Gastrocnemius medialis (tissue), 4 donors: ENCODE measurements at regions of chr4 and their contacts with region 1.

Region 1: DNA sequence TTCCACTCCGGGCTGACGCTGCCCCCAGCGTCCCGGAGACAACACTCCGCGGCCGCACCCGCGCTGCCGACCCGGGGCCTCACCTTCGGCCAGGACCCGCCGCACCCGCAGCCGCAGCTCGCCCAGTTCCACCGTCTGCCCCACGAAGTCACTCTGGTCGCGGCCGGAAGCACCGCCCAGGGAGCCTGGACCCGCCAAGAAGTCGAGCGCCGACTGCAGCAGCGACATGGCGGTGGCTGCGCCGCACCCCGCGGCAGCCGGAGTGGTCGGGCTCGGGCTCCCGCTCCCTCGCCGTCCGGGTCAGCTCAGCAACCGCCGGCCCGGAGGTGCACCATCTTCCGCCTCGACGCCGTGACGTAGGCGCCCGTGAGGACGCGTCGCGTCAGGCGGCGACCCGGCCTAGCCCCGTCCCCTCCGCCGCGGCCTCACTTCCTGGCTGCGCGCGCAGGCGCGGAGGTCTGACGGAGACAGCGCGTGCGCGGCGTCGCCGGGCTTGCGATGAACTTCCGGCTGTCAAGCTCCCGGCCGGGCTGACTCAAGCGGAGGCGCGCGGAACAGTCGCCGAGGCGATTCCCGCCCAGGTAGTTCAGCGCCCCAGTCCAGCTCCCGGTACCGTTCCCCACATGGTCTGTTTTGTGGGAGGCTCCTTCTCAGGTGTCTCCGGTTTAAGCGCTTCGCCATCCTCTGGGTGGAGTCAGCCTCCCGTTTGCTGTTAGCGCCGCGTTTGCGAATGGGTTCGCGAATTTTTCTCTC is at the starts of genes GAK and TMEM175:
- DNase-seq: peak; percentile 87 to 95
- ATAC-seq: peak; percentile 81 to 88
- H3K4me3 ChIP-seq: peak within 1 kb of the TSS; percentile 85 to 97 (median 96)
- H3K27ac ChIP-seq: peak within 1 kb of the TSS; percentile 90 to 97 (median 94)
- H3K4me1 ChIP-seq: peaks cover 29 to 39% of the 10 kb centered on the region in 2 donors
- H3K27me3 ChIP-seq: no peaks in the 10 kb centered on the region
- CTCF ChIP-seq: no peak
- POLR2A ChIP-seq: peak; percentile 91 to 96
- total RNA-seq, gene GAK: 34.9 to 48.3 (median 44.5) TPM
- total RNA-seq, gene TMEM175: 15.3 to 29.6 (median 20.8) TPM

Region 2: DNA sequence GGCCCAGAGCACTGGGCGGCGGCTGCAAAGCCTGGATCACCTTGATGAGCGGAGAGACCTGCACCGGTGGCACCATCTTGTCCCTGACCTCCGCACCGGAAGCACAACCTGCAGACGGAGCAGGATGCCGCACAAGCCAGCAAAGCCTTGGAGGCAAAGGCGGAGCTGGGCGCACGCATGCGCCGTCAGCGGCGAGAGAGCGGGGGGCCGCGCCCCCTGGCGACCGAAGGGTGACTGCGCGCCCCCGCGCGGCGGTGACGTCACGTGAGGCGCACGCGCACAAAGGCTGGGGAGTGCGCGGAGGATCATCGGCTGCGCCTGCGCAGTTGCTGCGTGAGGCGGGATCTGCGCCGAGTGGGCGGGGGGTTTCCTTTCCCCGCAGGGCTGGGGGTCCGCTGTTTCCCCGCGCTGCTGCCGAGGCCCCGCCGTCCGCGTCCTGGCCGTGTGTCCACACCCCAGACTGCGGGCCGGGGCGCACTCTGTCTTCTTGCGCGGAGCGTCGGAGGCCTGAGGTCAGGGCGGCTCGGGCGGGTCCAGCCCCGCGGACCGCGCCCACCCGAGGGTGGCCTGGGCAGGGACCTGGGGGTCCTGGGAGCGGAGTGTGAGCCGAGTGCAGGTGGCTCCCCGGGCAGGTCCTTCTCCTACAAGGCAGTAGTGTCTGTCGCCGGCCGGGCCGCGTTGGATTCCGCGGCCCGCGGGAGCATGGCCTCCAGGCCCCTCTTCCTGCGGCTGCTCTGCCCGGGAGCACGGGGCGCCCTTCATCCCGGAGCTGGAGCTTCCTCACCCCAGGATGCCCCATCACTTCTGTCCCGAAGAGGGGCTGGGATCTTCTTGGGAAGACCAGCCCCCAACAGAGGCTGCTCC is 257.7 kb before region 1 on chr4 and contains the starts of genes ATP5ME and MYL5:
- in situ Hi-C with region 1: no loop called
- intact Hi-C with region 1: loop called (anchors 5 kb)
- DNase-seq: peak; percentile 94 to 96
- ATAC-seq: peak; percentile 91 to 94
- H3K4me3 ChIP-seq: peak within 1 kb of the TSS; percentile 88 to 99 (median 98)
- H3K27ac ChIP-seq: peak within 1 kb of the TSS; percentile 90 to 99 (median 97)
- H3K4me1 ChIP-seq: peaks cover 31 to 48% of the 10 kb centered on the region in 2 donors
- H3K27me3 ChIP-seq: peaks cover 0 to 5% (median 0%) of the 10 kb centered on the region in 3 donors
- CTCF ChIP-seq: peak; percentile 79 to 97 (median 88)
- POLR2A ChIP-seq: peak; percentile 79 to 93
- total RNA-seq, gene ATP5ME: 24.7 to 172 (median 91.5) TPM
- total RNA-seq, gene MYL5: 1.3 to 20.3 (median 3.6) TPM

Region 3: DNA sequence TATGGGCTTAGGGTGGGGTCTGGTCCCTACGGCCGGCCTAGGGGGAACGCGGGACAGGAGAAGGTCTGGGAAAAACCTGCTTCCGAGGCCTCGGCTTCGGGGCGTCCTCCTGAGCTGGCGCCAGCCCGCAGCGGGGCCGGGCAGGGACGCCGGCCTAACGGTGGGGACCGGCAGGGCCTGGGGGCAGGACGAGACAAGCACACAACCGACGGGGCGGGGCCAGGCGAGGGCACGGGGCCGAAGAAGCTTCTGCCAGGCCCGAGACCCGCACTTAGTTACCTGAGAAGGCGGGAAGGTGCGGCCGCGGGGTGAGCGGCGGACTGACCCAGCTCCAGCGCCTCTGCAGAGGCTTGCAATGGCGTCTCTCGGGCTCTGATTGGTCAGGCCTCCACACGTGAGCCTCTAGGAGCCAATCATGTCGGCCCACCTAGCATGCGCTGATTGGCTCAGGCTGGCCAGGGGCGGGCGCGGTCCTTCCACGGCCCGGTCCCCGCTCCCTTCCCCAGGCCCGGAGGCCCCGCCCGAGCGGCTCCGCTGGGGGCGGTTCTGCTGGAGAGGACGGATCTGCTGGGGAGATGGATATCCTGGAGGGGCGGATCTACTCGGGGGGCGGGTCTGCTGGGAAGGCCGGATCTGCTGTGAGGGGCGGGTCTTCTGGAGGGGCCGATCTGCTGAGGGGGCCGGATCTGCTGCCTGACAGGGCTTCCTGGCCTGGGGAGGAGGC is 150.5 kb before region 1 on chr4:
- in situ Hi-C with region 1: no loop called
- intact Hi-C with region 1: loop called (anchors 1 kb)
- DNase-seq: peak; percentile 97 to 99
- ATAC-seq: peak; percentile 96 to 97
- H3K4me3 ChIP-seq: peak overlapping the region; percentile 85 to 99 (median 94)
- H3K27ac ChIP-seq: peak overlapping the region; percentile 88 to 94 (median 91)
- H3K4me1 ChIP-seq: peaks cover 13 to 32% of the 10 kb centered on the region in 2 donors
- H3K27me3 ChIP-seq: peaks cover 15 to 17% (median 16%) of the 10 kb centered on the region in 3 donors
- CTCF ChIP-seq: no peak
- POLR2A ChIP-seq: peak; percentile 94 to 97

Region 4: DNA sequence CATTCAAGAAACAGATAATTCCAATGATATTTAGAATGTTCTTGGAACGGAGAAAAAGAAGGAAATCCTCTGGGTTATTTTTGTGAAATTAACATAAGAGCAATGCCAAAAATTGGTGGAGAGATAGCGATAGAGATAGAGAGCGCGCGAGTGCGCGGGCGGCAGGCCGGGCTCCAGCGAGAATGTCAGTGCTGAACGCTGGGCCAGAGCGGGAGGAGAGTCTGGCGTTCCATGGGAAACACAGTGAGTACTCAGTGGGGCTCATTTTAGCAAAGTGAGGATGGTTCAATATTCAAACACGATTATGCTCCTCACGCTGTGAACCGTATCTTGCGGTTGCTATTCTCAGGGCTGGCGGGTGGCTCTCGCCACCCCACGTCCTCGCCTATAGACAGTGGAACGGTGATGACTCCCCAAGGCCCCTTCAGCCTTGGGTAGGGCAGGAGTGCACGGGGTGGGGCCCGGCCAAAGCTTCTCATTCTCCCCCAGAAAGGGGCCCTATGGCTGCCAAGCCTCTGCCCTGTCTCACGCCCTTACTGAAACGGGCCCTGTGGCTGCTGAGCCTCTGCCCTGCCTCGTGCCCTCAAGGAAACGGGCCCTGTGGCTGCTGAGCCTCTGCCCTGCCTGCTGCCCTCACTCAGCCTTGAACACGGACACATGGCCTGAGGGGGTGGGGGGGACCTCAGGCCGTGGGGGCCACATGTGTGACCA is 123.1 kb before region 1 on chr4:
- in situ Hi-C with region 1: no loop called
- intact Hi-C with region 1: no loop called
- DNase-seq: no peak
- ATAC-seq: no peak
- H3K4me3 ChIP-seq: no peak overlapping the region
- H3K27ac ChIP-seq: no peak overlapping the region
- H3K4me1 ChIP-seq: no peaks in the 10 kb centered on the region
- H3K27me3 ChIP-seq: peaks cover 34 to 38% (median 34%) of the 10 kb centered on the region in 3 donors
- CTCF ChIP-seq: no peak
- POLR2A ChIP-seq: no peak

Region 5: GRCh38 chr4:986879-987623 is 54.9 kb after region 1 on chr4 and contains the start of gene IDUA:
- in situ Hi-C with region 1: no loop called
- intact Hi-C with region 1: loop called (anchors 5 kb)
- DNase-seq: peak; percentile 48 to 51
- ATAC-seq: peak; percentile 70 to 78
- H3K4me3 ChIP-seq: peak within 1 kb of the TSS; percentile 57 to 80 (median 63)
- H3K27ac ChIP-seq: peak within 1 kb of the TSS; percentile 26 to 64 (median 53)
- H3K4me1 ChIP-seq: peaks cover 14 to 22% of the 10 kb centered on the region in 2 donors
- H3K27me3 ChIP-seq: no peaks in the 10 kb centered on the region
- CTCF ChIP-seq: peak in 3 of 5 experiments; percentile 33 to 39 (median 37)
- POLR2A ChIP-seq: no peak
- total RNA-seq, gene IDUA: 0.12 to 10.8 (median 2.4) TPM

Region 6: DNA sequence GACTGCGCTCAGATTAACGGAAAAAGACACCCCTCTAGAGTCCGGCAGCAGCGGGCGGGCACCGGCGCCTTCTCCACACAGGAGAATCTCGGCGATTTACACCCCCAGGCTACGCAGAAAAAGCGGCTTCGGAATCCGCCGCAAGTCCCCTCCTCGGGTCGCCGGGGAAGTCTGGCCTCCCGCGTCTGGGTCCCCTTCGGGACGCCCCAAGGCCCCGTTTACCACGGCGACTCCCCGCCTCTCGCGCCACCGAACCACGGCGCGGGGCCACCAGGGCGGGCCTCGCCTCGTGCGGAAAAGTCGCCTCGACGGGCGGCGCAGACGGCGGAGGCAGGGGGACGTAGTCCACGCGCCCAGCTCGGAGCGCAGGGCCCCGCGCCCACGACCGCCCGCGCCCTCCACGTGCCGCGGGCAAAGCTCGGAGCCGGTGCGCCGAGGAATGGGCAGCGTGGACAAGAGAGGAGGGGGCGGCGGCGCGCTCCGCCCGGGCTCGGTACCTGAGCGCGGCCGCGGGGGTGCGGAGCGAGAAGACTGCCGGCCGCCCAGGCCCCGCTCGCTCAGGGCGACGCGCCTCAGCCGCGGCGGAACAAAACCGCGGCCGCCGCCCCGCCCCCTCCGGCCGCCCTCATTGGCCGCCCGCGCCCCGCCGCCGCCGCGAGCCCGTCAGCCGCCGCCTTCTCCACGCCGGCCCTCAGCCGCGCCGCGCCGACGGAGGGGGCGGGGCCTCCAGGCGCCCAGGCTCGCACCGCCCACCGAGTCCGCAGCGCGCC is 751.8 kb after region 1 on chr4 and contains the start of gene FAM53A:
- in situ Hi-C with region 1: no loop called
- intact Hi-C with region 1: loop called (anchors 5 kb)
- DNase-seq: peak in 1 of 2 donors; percentile 79
- ATAC-seq: peak; percentile 85 to 86
- H3K4me3 ChIP-seq: peak within 1 kb of the TSS; percentile 62 to 85 (median 71)
- H3K27ac ChIP-seq: peak within 1 kb of the TSS; percentile 68 to 86 (median 80)
- H3K4me1 ChIP-seq: peaks cover 0 to 11% of the 10 kb centered on the region in 2 donors
- H3K27me3 ChIP-seq: no peaks in the 10 kb centered on the region
- CTCF ChIP-seq: peak in 4 of 5 experiments; percentile 17 to 39 (median 26)
- POLR2A ChIP-seq: peak; percentile 64 to 68
- total RNA-seq, gene FAM53A: 1.8 to 5.2 (median 2.8) TPM